ENCODE measurements at regions of chr2 and their contacts with region 1.

Region 1: GRCh38 chr2:47906157-47907038 is at the start of gene FBXO11:
- DNase-seq: peak; percentile 96 to 98
- H3K4me3 ChIP-seq: peak within 1 kb of the TSS; percentile 71 to 98
- H3K27ac ChIP-seq: peak within 1 kb of the TSS; percentile 98 to 99
- H3K4me1 ChIP-seq: no peaks in the 10 kb centered on the region
- H3K27me3 ChIP-seq: no peaks in the 10 kb centered on the region
- CTCF ChIP-seq: peak; percentile 60 to 67 (median 62)
- POLR2A ChIP-seq: peak; percentile 76 to 85
- total RNA-seq, gene FBXO11: 27.4 to 140 (median 67.3) TPM

Region 2: GRCh38 chr2:47486841-47487497 is 419.4 kb before region 1 on chr2:
- intact Hi-C with region 1: no loop called
- DNase-seq: no peak
- H3K4me3 ChIP-seq: no peak overlapping the region
- H3K27ac ChIP-seq: no peak overlapping the region
- H3K4me1 ChIP-seq: no peaks in the 10 kb centered on the region
- H3K27me3 ChIP-seq: no peaks in the 10 kb centered on the region
- CTCF ChIP-seq: no peak
- POLR2A ChIP-seq: no peak

Region 3: GRCh38 chr2:47782671-47783485 is 123.5 kb before region 1 on chr2 and contains the start of gene MSH6:
- intact Hi-C with region 1: loop called (anchors 5 kb)
- DNase-seq: peak; percentile 84 to 88
- H3K4me3 ChIP-seq: peak within 1 kb of the TSS; percentile 74 to 90
- H3K27ac ChIP-seq: peak within 1 kb of the TSS; percentile 90 to 97
- H3K4me1 ChIP-seq: no peaks in the 10 kb centered on the region
- H3K27me3 ChIP-seq: no peaks in the 10 kb centered on the region
- CTCF ChIP-seq: peak in 3 of 4 experiments; percentile 6 to 26 (median 8)
- POLR2A ChIP-seq: peak; percentile 85 to 94
- total RNA-seq, gene MSH6: 32.9 to 115 (median 57.7) TPM